AG04449 (cell line): ENCODE measurements at regions of chr19 and their contacts with region 1.

Region 1: GRCh38 chr19:28466107-28467045 is 746.6 kb downstream of the UQCRFS1 start:
- DNase-seq: no peak
- H3K4me3 ChIP-seq: no peak overlapping the region
- CTCF ChIP-seq: peak; percentile 49

Region 2: GRCh38 chr19:28454083-28454482 is 12.3 kb before region 1 on chr19:
- CTCF ChIA-PET with region 1: no interaction called
- POLR2A ChIA-PET with region 1: no interaction called
- DNase-seq: no peak
- H3K4me3 ChIP-seq: no peak overlapping the region
- CTCF ChIP-seq: no peak

Region 3: GRCh38 chr19:28485292-28485691 is 18.9 kb after region 1 on chr19:
- CTCF ChIA-PET with region 1: no interaction called
- POLR2A ChIA-PET with region 1: no interaction called
- DNase-seq: no peak
- H3K4me3 ChIP-seq: no peak overlapping the region
- CTCF ChIP-seq: no peak

Region 4: GRCh38 chr19:28705008-28705407 is 238.6 kb after region 1 on chr19:
- CTCF ChIA-PET with region 1: interaction called, 43 read pairs
- POLR2A ChIA-PET with region 1: no interaction called
- DNase-seq: peak; percentile 47
- H3K4me3 ChIP-seq: no peak overlapping the region
- CTCF ChIP-seq: peak; percentile 56

Region 5: GRCh38 chr19:28710278-28710677 is 243.9 kb after region 1 on chr19:
- CTCF ChIA-PET with region 1: interaction called, 43 read pairs
- POLR2A ChIA-PET with region 1: no interaction called
- DNase-seq: peak; percentile 19
- H3K4me3 ChIP-seq: no peak overlapping the region
- CTCF ChIP-seq: peak; percentile 47